H1 (cell line): ENCODE measurements at regions of chr9 and their contacts with region 1.

Region 1: DNA sequence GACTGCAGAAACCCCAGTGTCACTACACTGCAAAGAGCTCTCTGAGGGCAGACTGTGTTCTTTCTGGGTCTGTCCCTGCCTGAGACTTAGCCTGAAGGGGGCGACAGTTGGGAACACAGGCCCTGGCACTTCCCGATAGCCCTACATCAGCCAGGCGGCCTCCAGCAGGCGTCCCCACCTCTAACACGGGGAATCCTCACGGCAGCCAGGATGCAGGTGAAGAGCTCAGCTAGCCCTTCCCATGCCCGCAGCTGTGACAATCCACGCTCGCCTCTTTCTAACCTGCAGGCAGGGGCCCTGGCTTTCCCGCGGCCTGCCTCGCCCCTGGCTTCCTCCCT is 5.9 kb downstream of the MED22 start:
- DNase-seq: peak in 1 of 2 experiments; percentile 76
- H3K4me3 ChIP-seq: no peak overlapping the region
- H3K27ac ChIP-seq: no peak overlapping the region
- H3K4me1 ChIP-seq: peaks cover 0 to 7% (median 5%) of the 10 kb centered on the region in 4 experiments; a peak in 5 of 7 replicates
- H3K27me3 ChIP-seq: no peaks in the 10 kb centered on the region
- CTCF ChIP-seq: peak in 2 of 3 experiments; percentile 81 to 86; a peak in 3 of 4 replicates
- EP300 ChIP-seq: no peak
- POLR2A ChIP-seq: no peak
- RAD21 ChIP-seq: peak; percentile 19 to 33; a peak in 3 of 4 replicates

Region 2: DNA sequence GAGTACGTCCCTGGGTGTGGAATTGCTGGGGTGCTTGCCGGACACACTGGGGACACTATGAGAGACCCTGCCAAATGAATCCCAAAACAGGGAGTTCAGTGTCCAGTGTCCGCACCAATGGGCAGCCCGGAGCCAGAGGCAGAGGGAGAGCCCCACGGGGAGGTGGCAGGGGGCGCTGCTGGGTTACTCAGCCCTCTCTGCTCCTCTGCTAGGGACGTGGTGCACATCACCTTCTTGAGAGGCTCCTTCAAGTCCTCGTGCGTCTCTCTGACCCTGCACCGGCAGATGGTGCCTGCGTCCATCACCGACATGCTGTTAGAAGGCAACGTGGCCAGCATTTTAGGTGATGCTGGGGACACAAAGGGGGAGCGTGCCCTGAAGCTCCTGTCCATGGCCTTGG is 54.9 kb after region 1 on chr9:
- CTCF ChIA-PET with region 1: interaction called, 15 read pairs
- POLR2A ChIA-PET with region 1: no interaction called
- DNase-seq: peak in 1 of 2 experiments; percentile 81
- H3K4me3 ChIP-seq: no peak overlapping the region
- H3K27ac ChIP-seq: no peak overlapping the region
- H3K4me1 ChIP-seq: no peaks in the 10 kb centered on the region
- H3K27me3 ChIP-seq: no peaks in the 10 kb centered on the region; a peak in 3 of 7 replicates
- CTCF ChIP-seq: peak in 2 of 3 experiments; percentile 76 to 87; a peak in 3 of 4 replicates
- EP300 ChIP-seq: no peak
- POLR2A ChIP-seq: no peak
- RAD21 ChIP-seq: peak; percentile 53 to 58